ENCODE measurements at regions of chr9 and their contacts with region 1.

Region 1: DNA sequence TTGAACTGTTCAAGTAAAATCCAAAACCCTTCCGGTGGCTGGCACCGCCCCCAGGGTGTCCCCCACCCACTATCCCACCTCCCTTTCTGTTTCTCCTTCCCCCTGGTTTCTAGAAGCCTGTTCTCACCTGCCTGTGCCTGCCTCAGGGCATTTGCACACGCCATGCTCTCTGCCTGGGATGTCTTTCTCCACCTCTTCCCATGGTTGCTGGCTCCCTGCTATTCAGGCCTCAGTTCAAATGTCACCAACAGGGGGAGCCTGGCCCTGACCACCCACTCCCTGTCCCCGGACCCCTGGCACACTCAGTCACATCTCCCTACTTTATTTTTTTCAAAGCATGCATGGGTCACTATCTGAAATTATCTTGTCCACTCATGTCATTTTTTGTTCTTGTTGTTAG is 39.9 kb upstream of the EEIG1 start:
- DNase-seq: no peak
- ATAC-seq: no peak
- H3K4me3 Mint-ChIP-seq: no peak overlapping the region
- H3K27ac Mint-ChIP-seq: peak overlapping the region; percentile 66
- H3K4me1 Mint-ChIP-seq: peaks cover 60% of the 10 kb centered on the region
- H3K27me3 Mint-ChIP-seq: no peaks in the 10 kb centered on the region

Region 2: GRCh38 chr9:128007566-128008138 is 13.0 kb before region 1 on chr9:
- CTCF ChIA-PET with region 1: interaction called, 25 read pairs
- POLR2A ChIA-PET with region 1: interaction called, 16 read pairs
- DNase-seq: peak; percentile 90
- ATAC-seq: peak; percentile 89
- H3K4me3 Mint-ChIP-seq: peak overlapping the region; percentile 61
- H3K27ac Mint-ChIP-seq: peak overlapping the region; percentile 90
- H3K4me1 Mint-ChIP-seq: peaks cover 53% of the 10 kb centered on the region
- H3K27me3 Mint-ChIP-seq: no peaks in the 10 kb centered on the region